CD4-positive, alpha-beta memory T cell (primary cell): ENCODE measurements at regions of chr15 and their contacts with region 1.

Region 1: DNA sequence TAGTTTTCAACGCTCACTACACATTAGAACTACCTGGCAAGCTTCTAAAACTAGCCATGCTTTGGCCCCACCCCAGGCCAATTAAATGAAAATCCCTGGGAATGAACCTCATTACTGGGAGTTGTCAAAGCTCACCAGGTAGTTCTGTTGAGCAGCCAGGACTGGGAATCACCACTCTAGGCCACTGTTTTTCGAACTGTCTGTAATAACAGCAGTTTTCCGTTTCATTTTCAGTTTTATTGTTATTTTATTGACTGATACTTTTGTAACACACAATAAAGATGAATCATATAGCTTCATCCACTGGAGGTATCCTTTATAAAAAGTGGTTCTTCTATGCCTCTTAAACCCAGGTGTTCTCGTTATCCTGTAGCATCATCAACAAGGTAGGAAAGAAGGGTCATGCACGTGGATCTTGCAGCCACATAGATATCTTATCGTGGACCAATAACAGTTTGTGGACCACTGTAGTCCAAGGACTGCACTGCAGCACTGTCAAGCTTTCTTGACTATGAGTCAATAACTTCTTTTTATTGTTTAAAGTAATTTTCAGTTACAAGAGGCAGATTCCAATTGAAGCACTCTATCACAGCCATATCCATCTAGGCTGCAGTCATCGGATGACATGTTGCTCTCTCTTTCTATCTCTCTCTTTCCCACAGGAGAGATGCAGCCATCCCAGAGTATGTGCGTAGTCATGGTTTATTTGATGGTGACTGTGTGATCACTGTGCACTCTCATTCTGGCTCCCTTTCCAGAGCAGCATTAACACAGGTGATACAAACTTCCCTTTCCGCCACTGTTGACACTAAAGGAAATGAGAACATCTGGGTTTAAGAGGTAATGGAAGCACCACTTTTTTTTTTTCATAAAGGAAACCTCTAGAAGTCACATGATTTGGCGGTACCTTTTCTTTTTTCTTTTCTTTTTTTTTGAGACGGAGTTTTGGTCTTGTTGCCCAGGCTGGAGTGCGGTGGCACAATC is 39.0 kb upstream of the BLM start:
- DNase-seq: peak in 4 of 5 donors; percentile 48 to 61 (median 53)
- H3K4me3 ChIP-seq: no peak overlapping the region
- H3K4me3 Mint-ChIP-seq: peak overlapping the region; percentile 42 to 88 (median 73)
- H3K27ac ChIP-seq: no peak overlapping the region
- H3K27ac Mint-ChIP-seq: peak overlapping the region; percentile 60 to 93 (median 81)
- H3K4me1 ChIP-seq: peaks cover 19% of the 10 kb centered on the region
- H3K4me1 Mint-ChIP-seq: peaks cover 9 to 19% (median 13%) of the 10 kb centered on the region in 4 donors
- H3K27me3 ChIP-seq: no peaks in the 10 kb centered on the region
- H3K27me3 Mint-ChIP-seq: peaks cover 0 to 2% of the 10 kb centered on the region in 2 donors

Region 2: GRCh38 chr15:90451053-90451850 is 226.8 kb before region 1 on chr15:
- CTCF ChIA-PET with region 1: no interaction called
- POLR2A ChIA-PET with region 1: no interaction called
- intact Hi-C with region 1: no loop called
- DNase-seq: no peak
- H3K4me3 ChIP-seq: no peak overlapping the region
- H3K4me3 Mint-ChIP-seq: no peak overlapping the region
- H3K27ac ChIP-seq: no peak overlapping the region
- H3K27ac Mint-ChIP-seq: peak overlapping the region in 2 of 7 donors; percentile 48 to 68
- H3K4me1 ChIP-seq: no peaks in the 10 kb centered on the region
- H3K4me1 Mint-ChIP-seq: peaks cover 0 to 9% (median 2%) of the 10 kb centered on the region in 4 donors
- H3K27me3 ChIP-seq: no peaks in the 10 kb centered on the region
- H3K27me3 Mint-ChIP-seq: no peaks in the 10 kb centered on the region

Region 3: DNA sequence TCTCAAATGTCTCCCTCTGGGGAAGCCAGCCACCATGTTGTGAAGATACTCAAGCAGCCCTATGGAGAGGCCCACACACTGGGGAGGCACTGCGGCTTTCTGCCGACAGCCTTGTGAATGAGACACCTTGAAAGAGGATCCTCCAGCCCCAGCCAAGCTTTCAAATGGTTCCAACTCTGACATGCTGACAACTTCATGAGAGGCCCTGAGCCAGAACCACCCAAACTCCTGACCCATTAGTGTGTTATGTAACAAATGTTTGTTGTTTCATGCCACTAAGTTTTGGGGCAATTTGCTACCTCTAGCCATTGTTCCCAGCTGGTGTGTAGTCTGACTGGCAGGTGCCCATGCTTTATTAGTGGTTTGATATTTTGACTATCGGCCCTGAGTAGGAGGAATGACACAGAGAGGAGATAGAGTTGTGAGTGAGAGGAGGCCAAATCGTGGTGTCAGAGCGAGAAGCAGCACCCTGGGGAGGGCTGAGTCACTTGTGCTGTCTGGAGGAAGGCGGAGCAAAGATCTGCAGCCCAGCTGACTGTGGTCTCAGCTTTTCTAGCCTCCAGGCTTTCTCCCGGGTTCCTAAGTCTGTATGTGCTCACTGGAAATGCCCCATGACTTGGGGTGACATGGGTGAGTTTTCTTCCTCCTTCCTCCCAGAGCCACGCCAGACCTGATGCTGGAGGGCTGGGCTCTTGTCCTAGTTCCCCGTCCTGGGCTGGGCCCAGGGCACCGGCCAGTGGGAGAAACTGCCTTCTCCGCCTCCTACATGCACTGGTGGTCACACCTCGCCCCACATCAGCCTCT is 17.7 kb before region 1 on chr15:
- CTCF ChIA-PET with region 1: no interaction called
- POLR2A ChIA-PET with region 1: interaction called, 5 read pairs
- intact Hi-C with region 1: loop called (anchors 1 kb)
- DNase-seq: peak; percentile 28 to 75 (median 32)
- H3K4me3 ChIP-seq: peak overlapping the region in 1 of 2 donors; percentile 33
- H3K4me3 Mint-ChIP-seq: peak overlapping the region; percentile 47 to 90 (median 79)
- H3K27ac ChIP-seq: no peak overlapping the region
- H3K27ac Mint-ChIP-seq: peak overlapping the region in 4 of 7 donors; percentile 16 to 84 (median 41)
- H3K4me1 ChIP-seq: peaks cover 61% of the 10 kb centered on the region
- H3K4me1 Mint-ChIP-seq: peaks cover 52 to 75% (median 62%) of the 10 kb centered on the region in 4 donors
- H3K27me3 ChIP-seq: peaks cover 12% of the 10 kb centered on the region
- H3K27me3 Mint-ChIP-seq: peaks cover 26 to 37% of the 10 kb centered on the region in 2 donors